ENCODE measurements at regions of chr6 and their contacts with region 1.

Region 1: DNA sequence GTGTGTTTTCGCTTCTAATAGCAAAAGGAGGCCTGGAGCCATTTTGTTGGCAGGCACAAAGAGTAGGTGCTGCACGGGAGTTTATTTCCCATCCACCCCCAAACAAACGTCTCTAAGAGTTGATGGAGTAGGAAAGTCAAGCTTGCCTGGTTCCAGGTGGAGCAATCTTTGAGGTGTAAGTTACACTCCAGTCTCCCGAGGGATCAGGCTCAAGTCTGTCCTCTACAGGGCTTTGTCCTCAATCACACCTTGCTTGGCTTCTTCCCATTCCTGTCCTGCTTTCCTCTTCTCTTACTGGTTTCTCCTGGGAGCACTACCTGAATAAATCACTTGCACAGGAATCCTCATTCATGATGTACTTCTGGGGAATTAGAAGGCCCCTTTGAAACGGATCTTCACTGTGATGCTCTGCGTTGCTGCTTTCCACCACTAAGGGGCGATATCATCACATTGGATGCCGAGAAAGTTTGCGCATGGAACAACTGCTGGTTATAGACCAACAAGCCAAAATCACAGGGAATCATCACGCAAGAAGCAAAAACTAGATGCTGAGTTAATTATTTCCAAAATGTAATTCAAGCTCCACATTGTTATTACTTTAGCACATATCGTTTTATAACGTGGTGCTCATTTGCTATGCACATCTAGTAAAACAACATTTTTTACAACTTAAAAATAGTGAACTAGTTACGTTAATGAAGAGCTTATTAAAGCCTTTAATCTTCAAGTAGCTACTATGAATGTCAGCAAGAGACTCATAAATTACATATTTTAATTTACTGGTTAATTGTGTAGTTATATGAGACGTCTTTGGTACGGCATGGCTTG is 156.8 kb downstream of the DNAH8 start:
- DNase-seq: peak; percentile 76
- ATAC-seq: peak; percentile 69
- H3K4me3 Mint-ChIP-seq: no peak overlapping the region
- H3K27ac Mint-ChIP-seq: no peak overlapping the region
- H3K4me1 Mint-ChIP-seq: peaks cover 22% of the 10 kb centered on the region
- H3K27me3 Mint-ChIP-seq: peaks cover 5% of the 10 kb centered on the region
- CTCF ChIP-seq: peak; percentile 93

Region 2: GRCh38 chr6:38552121-38552520 is 319.8 kb before region 1 on chr6:
- CTCF ChIA-PET with region 1: no interaction called
- POLR2A ChIA-PET with region 1: no interaction called
- intact Hi-C with region 1: no loop called
- DNase-seq: no peak
- ATAC-seq: no peak
- H3K4me3 Mint-ChIP-seq: no peak overlapping the region
- H3K27ac Mint-ChIP-seq: no peak overlapping the region
- H3K4me1 Mint-ChIP-seq: peaks cover 2% of the 10 kb centered on the region
- H3K27me3 Mint-ChIP-seq: no peaks in the 10 kb centered on the region
- CTCF ChIP-seq: no peak

Region 3: GRCh38 chr6:38933432-38933831 is 61.5 kb after region 1 on chr6:
- CTCF ChIA-PET with region 1: interaction called, 19 read pairs
- POLR2A ChIA-PET with region 1: no interaction called
- intact Hi-C with region 1: loop called (anchors 5 kb)
- DNase-seq: no peak
- ATAC-seq: no peak
- H3K4me3 Mint-ChIP-seq: no peak overlapping the region
- H3K27ac Mint-ChIP-seq: no peak overlapping the region
- H3K4me1 Mint-ChIP-seq: no peaks in the 10 kb centered on the region
- H3K27me3 Mint-ChIP-seq: peaks cover 7% of the 10 kb centered on the region
- CTCF ChIP-seq: peak; percentile 34

Region 4: GRCh38 chr6:38973178-38974054 is 101.5 kb after region 1 on chr6:
- CTCF ChIA-PET with region 1: interaction called, 21 read pairs
- POLR2A ChIA-PET with region 1: no interaction called
- intact Hi-C with region 1: no loop called
- DNase-seq: peak; percentile 51
- ATAC-seq: peak; percentile 97
- H3K4me3 Mint-ChIP-seq: no peak overlapping the region
- H3K27ac Mint-ChIP-seq: no peak overlapping the region
- H3K4me1 Mint-ChIP-seq: peaks cover 2% of the 10 kb centered on the region
- H3K27me3 Mint-ChIP-seq: peaks cover 13% of the 10 kb centered on the region
- CTCF ChIP-seq: peak; percentile 68

Region 5: DNA sequence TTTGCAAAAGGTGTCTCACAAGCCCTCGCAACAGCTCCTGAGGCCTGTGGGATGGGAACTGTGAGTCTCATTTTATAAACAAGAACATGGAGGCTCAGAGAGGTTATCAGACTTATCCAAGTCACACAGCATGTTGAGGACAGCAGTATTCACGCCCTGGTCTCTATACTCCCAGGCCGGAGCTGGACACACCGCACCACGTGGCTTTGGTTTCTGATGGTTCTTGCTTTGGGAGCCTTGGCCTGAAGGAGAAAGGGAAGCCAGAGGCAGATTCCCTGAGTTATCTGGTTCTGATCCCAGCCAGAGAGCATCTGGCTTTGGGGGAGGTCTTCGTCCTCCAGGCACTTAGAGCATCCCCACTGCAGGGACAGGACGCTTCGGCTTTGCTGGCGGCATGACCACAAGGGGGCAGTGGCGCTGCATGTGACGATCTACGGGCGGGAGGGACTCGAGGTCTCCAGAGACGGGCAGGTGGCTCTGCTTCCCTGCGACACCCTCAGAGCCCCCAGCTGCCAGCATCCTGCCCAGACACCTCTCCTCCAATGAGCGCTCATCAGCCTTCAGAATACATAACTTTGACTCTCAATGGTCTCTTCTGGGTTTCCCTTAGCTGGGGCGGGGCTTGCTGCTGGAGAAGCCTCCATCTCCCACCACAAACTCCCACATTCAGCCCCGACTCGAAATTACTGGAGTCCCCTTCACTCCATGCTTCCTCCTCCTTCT is 294.4 kb after region 1 on chr6:
- CTCF ChIA-PET with region 1: interaction called, 13 read pairs
- POLR2A ChIA-PET with region 1: no interaction called
- intact Hi-C with region 1: no loop called
- DNase-seq: peak; percentile 90
- ATAC-seq: peak; percentile 97
- H3K4me3 Mint-ChIP-seq: no peak overlapping the region
- H3K27ac Mint-ChIP-seq: no peak overlapping the region
- H3K4me1 Mint-ChIP-seq: peaks cover 8% of the 10 kb centered on the region
- H3K27me3 Mint-ChIP-seq: no peaks in the 10 kb centered on the region
- CTCF ChIP-seq: peak; percentile 91

Region 6: DNA sequence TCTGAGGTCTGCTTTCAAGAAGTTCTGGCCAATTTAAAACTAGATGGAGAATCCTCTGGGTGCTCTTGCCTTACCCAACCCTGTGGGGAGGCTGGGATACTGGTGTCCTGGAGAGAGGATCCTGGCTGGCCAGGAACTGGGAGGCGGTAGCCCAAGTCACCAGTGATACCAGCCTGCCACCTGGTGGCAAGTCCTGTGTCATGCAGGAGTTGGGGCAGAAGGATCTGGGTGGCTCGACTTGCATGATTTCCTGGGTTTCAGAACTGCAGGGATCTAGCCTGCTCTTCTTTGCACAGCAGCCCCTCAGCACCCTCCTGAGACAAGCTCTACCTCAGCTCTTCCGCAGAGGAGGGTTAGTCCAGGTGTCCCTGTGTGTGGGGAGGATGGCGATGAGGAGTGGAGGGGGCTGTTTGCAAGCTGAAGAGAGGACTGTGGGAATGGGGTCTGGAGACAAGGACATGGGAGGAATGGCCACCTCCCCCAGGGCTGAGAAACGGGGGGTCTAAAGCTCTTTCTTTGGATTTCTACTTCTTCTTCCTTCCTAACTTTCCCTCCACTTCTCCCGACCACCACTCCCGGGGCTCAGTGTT is 438.1 kb after region 1 on chr6:
- CTCF ChIA-PET with region 1: interaction called, 32 read pairs
- POLR2A ChIA-PET with region 1: no interaction called
- intact Hi-C with region 1: no loop called
- DNase-seq: peak; percentile 68
- ATAC-seq: peak; percentile 83
- H3K4me3 Mint-ChIP-seq: no peak overlapping the region
- H3K27ac Mint-ChIP-seq: no peak overlapping the region
- H3K4me1 Mint-ChIP-seq: peaks cover 2% of the 10 kb centered on the region
- H3K27me3 Mint-ChIP-seq: peaks cover 27% of the 10 kb centered on the region
- CTCF ChIP-seq: peak; percentile 77